WTC11 (cell line): ENCODE measurements at regions of chr19 and their contacts with region 1.

Region 1: GRCh38 chr19:18521885-18522624 is at the start of gene ELL:
- DNase-seq: peak; percentile 100
- ATAC-seq: peak; percentile 95
- H3K4me3 Mint-ChIP-seq: peak within 1 kb of the TSS; percentile 81
- H3K27ac Mint-ChIP-seq: peak within 1 kb of the TSS; percentile 87
- H3K4me1 Mint-ChIP-seq: peaks cover 7% of the 10 kb centered on the region
- H3K27me3 Mint-ChIP-seq: no peaks in the 10 kb centered on the region
- CTCF ChIP-seq: no peak
- total RNA-seq, gene ELL: 11.6 to 17.3 TPM (median 13.1 TPM) in 3 replicates

Region 2: GRCh38 chr19:18362934-18363542 is 159.0 kb before region 1 on chr19:
- CTCF ChIA-PET with region 1: no interaction called
- POLR2A ChIA-PET with region 1: no interaction called
- DNase-seq: no peak
- ATAC-seq: no peak
- H3K4me3 Mint-ChIP-seq: no peak overlapping the region
- H3K27ac Mint-ChIP-seq: peak overlapping the region; percentile 97
- H3K4me1 Mint-ChIP-seq: peaks cover 31% of the 10 kb centered on the region
- H3K27me3 Mint-ChIP-seq: no peaks in the 10 kb centered on the region
- CTCF ChIP-seq: no peak

Region 3: DNA sequence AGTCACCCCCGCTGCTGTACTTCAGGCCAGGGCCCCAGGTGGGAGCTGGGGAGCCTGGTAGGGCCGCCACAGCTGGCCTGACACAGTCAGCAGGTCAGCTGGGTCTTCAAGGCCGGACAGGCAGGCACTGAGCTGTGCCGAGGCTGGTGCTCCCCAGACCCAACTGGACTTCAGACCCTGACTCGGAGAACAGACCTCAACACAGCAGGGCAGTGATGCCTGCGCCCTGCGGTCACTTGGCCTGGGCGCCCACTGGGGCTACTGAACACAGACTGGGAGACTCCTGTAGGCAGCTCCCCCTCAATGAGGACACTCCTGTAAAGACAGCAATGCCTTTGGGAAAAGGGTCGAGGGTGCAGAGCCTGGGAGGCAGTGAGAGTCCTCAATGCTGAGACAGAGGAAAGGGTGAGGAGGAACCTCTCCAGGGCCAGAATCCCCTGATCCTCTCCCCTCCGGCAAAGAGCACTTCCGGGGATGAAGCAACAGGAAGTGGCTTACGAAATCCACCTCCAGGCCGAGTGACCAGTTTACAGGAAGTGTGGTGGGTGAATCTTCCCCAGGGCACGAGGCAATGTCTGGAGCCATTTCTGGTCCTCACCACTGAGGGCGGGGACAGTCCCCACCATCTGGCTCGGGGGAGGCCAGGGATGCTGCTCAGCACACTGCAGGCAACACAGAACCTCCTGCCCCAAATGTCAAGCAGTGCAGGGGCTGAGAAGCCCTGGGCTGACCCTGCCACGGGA is 43.3 kb before region 1 on chr19:
- CTCF ChIA-PET with region 1: interaction called, 31 read pairs
- POLR2A ChIA-PET with region 1: no interaction called
- DNase-seq: no peak
- ATAC-seq: no peak
- H3K4me3 Mint-ChIP-seq: no peak overlapping the region
- H3K27ac Mint-ChIP-seq: peak overlapping the region; percentile 85
- H3K4me1 Mint-ChIP-seq: peaks cover 28% of the 10 kb centered on the region
- H3K27me3 Mint-ChIP-seq: no peaks in the 10 kb centered on the region
- CTCF ChIP-seq: no peak

Region 4: GRCh38 chr19:18557474-18558201 is 35.6 kb after region 1 on chr19 and contains the start of gene KXD1:
- CTCF ChIA-PET with region 1: interaction called, 14 read pairs
- POLR2A ChIA-PET with region 1: no interaction called
- DNase-seq: peak; percentile 79
- ATAC-seq: peak; percentile 91
- H3K4me3 Mint-ChIP-seq: peak within 1 kb of the TSS; percentile 87
- H3K27ac Mint-ChIP-seq: peak within 1 kb of the TSS; percentile 73
- H3K4me1 Mint-ChIP-seq: peaks cover 8% of the 10 kb centered on the region
- H3K27me3 Mint-ChIP-seq: no peaks in the 10 kb centered on the region
- CTCF ChIP-seq: no peak
- total RNA-seq, gene KXD1: 136 to 155 TPM (median 154 TPM) in 3 replicates

Region 5: DNA sequence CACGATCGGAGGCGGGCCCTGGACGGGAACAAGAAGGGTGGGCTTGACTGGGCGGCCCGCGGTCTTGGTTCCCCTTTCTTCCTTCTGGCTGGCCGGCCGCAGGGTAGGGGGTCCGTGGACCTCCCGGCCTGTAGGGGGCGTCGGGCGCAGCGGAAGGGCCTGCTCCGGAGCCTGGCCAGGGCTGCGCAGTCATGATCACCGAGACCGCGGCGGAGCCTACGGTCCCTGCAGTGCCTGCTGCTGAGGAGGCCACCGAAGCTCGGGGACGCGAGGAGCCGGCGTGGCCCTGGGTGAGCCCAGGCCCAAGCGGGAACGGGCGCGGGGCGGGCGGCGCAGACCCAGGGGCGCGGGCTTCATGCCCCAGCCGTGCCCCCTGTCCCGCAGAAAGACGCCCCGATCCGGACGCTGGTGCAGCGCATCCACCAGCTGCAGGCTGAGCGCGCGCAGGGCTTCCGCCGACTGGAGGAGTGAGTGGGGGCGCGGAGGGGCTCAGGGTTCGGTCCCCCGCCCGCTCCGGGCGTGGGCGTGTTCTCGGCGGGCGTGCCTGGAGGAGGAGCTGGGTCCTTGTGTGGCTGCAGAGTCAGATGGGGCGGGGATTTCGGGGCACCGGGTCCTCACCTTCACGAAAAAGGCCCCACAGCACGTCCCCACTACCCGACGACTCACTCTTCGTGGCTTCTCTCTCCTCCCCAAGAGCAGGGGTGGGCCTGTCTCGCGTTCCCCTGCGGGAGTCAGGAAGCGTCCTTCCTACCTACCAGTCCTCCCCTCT is 66.7 kb after region 1 on chr19 and contains the start of gene REX1BD:
- CTCF ChIA-PET with region 1: interaction called, 36 read pairs
- POLR2A ChIA-PET with region 1: interaction called, 4 read pairs
- DNase-seq: peak; percentile 87
- ATAC-seq: peak; percentile 51
- H3K4me3 Mint-ChIP-seq: peak within 1 kb of the TSS; percentile 86
- H3K27ac Mint-ChIP-seq: peak within 1 kb of the TSS; percentile 98
- H3K4me1 Mint-ChIP-seq: peaks cover 32% of the 10 kb centered on the region
- H3K27me3 Mint-ChIP-seq: peaks cover 10% of the 10 kb centered on the region
- CTCF ChIP-seq: peak; percentile 85
- total RNA-seq, gene REX1BD: 90.2 to 107 TPM (median 99.0 TPM) in 3 replicates

Region 6: DNA sequence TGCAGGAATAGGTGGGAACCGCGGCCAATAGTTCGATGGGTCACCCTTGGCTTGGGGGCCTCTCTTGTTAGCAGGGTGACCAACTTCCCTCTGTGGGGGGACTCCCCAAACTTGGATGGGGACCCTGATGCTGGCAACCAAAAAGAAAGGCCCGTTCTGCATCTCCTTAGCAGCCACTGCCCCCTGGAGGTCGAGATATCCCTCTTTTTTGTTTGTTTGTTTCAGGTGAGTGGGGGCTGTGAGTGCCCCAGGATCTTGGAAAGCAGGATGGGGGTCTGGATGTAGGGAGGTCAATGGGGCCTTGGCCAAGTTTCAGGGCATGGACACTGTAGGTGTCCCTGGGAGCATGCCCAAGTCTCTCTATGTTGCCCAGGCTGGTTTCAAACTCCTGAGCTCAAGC is 153.7 kb after region 1 on chr19:
- CTCF ChIA-PET with region 1: interaction called, 14 read pairs
- POLR2A ChIA-PET with region 1: no interaction called
- DNase-seq: peak; percentile 65
- ATAC-seq: peak; percentile 26
- H3K4me3 Mint-ChIP-seq: no peak overlapping the region
- H3K27ac Mint-ChIP-seq: no peak overlapping the region
- H3K4me1 Mint-ChIP-seq: peaks cover 18% of the 10 kb centered on the region
- H3K27me3 Mint-ChIP-seq: no peaks in the 10 kb centered on the region
- CTCF ChIP-seq: peak; percentile 45; the same call in 1 of the 2 replicates

Region 7: DNA sequence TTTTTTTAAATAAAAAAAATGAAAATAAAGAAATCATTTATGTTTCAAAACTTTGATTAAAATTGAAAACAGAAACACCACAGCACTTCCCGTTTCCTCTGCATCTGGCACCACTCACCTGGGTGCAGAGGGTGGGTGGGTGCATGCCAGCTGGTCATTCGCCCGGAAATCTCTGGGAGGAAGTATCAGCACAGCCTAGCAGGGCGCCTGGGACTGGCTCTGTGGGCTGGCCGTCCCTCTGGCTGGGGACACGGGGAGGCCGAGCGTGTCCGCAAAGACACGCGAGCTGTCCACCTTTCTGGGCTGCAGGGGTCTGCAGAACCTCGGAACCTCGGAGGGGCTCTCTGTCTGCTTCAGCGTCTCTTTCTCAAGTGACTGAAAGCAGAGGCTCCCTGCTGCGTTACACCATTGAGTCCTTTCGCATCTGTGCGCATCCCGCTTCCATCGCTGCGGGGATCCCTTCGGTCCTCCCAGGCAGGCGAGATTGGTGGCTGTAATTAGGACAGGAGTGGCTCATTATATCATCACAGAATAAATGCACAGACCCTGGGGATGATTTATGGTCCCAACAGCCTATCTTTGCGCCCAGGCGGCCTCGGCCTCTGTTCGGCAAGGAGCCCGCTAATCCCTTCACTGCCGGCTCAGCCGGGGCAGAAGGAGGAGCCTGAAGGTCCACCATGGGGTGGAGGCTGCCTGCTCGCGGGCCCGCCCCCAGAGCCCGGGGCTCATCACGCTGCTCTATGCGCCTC is 178.6 kb after region 1 on chr19:
- CTCF ChIA-PET with region 1: no interaction called
- POLR2A ChIA-PET with region 1: no interaction called
- DNase-seq: peak; percentile 72
- ATAC-seq: peak; percentile 96
- H3K4me3 Mint-ChIP-seq: peak overlapping the region; percentile 63
- H3K27ac Mint-ChIP-seq: no peak overlapping the region
- H3K4me1 Mint-ChIP-seq: peaks cover 19% of the 10 kb centered on the region
- H3K27me3 Mint-ChIP-seq: peaks cover 4% of the 10 kb centered on the region
- CTCF ChIP-seq: no peak